H1 (cell line): ENCODE measurements at regions of chr10 and their contacts with region 1.

Region 1: DNA sequence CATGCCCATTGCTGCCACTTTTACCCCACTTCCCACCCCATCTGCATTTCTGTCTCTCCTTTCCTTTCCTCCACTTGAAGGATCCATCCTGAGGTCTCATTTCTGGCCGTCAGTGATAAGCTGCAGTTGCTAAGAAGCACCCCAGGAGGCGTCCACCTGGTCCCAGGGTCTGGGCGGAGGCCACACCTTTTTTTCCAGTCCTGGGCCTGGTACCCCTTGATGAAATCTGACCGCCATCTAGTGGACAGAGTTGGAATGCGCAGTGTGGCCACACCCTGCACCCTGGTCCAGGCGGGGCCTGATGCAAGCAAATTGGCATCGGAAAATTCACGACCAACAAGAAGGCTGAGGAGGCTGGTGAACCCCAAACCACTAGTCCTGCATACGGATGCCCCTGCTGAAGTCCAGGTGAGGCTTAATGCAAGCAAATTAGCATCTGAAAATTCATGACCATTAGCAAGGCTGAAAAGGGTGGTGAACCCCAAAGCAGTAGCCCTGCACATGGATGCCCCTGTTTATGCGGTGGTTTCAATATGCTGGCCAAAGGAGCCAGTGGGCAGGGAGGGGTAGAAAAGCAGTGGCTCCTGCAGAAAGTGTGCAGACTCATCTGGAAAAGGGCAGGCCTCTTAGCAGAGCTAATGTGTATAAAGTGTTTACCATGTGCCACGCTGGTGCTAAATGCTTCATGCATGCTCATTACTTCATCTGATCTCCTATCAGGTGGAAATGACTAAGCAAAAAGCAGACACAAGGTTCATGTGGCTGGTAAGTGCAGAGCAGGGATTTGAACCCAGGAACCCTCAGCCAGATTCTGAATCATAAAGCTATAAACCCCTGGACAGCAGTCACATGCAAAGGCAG is 43.2 kb downstream of the GPAM start:
- DNase-seq: peak; percentile 75 to 96
- H3K4me3 ChIP-seq: no peak overlapping the region
- H3K27ac ChIP-seq: no peak overlapping the region
- H3K4me1 ChIP-seq: no peaks in the 10 kb centered on the region; a peak in 2 of 7 replicates
- H3K27me3 ChIP-seq: no peaks in the 10 kb centered on the region
- CTCF ChIP-seq: peak; percentile 86 to 99 (median 97)
- EP300 ChIP-seq: no peak
- POLR2A ChIP-seq: no peak
- RAD21 ChIP-seq: peak; percentile 85 to 90

Region 2: DNA sequence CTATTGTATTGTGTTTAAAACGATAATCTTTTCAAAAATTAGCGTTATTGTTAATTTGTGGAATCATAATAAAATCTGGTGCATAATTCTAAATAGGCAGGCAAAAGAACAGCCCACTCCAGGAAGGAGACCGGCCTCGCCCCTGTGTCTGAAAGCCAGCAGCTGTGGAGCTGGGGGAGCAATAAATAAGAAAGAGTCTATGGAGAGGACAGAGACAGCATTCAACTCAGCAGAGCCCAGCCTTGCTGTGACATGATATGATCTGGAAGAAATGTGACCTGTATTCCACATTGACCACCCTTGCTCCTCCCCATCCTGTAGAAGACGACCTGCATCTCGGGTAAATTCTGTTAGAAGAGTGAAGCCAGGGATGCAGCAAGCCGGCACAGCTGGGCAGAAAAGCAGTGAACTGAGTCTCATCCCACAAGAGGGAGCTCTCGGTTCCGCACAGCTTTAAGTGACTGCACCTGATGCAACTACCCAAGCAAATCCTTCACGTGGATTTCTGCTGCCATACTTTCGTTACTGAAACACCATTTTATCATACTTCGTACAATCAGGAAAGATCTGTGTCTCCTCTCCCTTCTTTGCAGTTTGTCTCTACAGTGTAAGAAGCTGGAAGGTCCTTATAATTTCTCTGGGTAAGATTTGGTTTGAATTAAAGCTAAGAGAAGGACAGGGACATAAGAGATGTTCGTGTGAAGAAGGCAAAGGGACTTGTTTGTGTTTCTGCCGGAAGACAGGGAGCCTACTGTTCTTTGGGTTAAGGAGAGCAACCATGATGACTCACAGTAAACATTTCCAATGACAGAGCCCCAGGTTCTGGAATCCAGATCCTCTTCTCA is 383.9 kb before region 1 on chr10:
- CTCF ChIA-PET with region 1: interaction called, 33 read pairs
- POLR2A ChIA-PET with region 1: no interaction called
- DNase-seq: peak; percentile 44 to 60
- H3K4me3 ChIP-seq: no peak overlapping the region
- H3K27ac ChIP-seq: no peak overlapping the region
- H3K4me1 ChIP-seq: no peaks in the 10 kb centered on the region
- H3K27me3 ChIP-seq: peaks cover 0 to 3% (median 2%) of the 10 kb centered on the region in 4 experiments; a peak in 2 of 7 replicates
- CTCF ChIP-seq: peak; percentile 79 to 90 (median 80)
- EP300 ChIP-seq: no peak
- POLR2A ChIP-seq: no peak
- RAD21 ChIP-seq: peak; percentile 84 to 87

Region 3: DNA sequence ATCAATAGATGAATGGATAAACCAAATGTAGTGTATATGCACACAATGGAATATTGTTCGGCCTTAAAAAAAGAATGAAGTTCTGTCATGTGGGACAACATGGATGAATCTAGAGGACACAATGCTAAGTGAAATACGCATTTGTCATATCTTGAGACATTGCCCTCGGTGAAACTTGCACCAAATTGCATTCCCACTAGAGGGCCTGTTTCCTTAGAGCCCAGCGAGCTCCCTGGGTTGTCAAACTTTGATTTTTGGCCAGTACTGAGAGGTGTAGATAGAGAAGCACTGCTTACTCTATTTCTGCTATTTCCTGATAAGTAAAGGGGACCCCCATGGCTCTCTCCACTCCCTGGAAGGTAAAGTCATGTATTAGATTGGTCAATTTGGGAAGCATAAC is 113.9 kb before region 1 on chr10:
- CTCF ChIA-PET with region 1: interaction called, 62 read pairs
- POLR2A ChIA-PET with region 1: interaction called, 3 read pairs
- DNase-seq: no peak
- H3K4me3 ChIP-seq: no peak overlapping the region
- H3K27ac ChIP-seq: no peak overlapping the region
- H3K4me1 ChIP-seq: no peaks in the 10 kb centered on the region
- H3K27me3 ChIP-seq: no peaks in the 10 kb centered on the region
- CTCF ChIP-seq: peak in 2 of 3 experiments; percentile 57 to 61; a peak in 3 of 4 replicates
- EP300 ChIP-seq: no peak
- POLR2A ChIP-seq: no peak
- RAD21 ChIP-seq: peak; percentile 38 to 61; a peak in 3 of 4 replicates

Region 4: DNA sequence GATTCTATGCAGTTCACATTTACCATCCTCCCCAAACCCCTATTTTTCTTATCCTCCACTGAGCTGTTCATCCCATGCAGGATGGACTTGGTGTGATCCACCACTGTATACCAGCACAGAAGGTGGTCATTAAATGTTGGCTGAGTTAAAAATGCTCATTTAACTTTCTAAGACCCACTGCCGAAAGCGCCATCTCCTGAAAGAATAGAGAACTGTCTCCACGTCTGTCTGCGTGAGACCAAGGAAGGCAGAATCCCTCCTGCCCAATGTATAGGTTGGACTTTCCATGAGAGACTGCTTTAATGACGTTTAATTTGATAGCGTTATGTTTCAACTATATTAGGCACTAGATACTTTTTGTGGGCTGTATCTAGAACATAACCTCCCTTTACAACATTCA is 81.1 kb before region 1 on chr10:
- CTCF ChIA-PET with region 1: interaction called, 10 read pairs
- POLR2A ChIA-PET with region 1: no interaction called
- DNase-seq: no peak
- H3K4me3 ChIP-seq: no peak overlapping the region
- H3K27ac ChIP-seq: no peak overlapping the region
- H3K4me1 ChIP-seq: no peaks in the 10 kb centered on the region
- H3K27me3 ChIP-seq: no peaks in the 10 kb centered on the region
- CTCF ChIP-seq: peak; percentile 20 to 44 (median 41)
- EP300 ChIP-seq: no peak
- POLR2A ChIP-seq: no peak
- RAD21 ChIP-seq: peak; percentile 31 to 49

Region 5: DNA sequence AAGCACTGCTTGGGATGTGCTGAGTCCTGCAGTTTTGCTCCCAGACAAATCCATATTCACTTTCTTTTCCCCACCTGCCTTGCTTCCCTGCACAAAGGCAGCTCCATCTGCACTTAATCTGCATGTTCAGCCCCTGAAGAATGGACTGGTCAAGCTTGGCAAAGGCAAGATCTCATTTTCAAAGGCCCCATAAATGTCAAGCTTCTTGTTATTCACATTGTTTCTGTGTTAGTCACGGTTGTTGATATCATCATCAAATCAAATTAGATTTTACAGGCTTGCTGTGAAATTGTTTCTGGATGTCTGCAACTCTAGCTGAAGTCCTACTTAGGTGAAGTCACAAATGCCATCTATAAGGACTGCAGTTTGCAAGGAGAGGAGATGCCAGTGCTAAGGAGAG is 47.8 kb before region 1 on chr10:
- CTCF ChIA-PET with region 1: interaction called, 14 read pairs
- POLR2A ChIA-PET with region 1: no interaction called
- DNase-seq: no peak
- H3K4me3 ChIP-seq: no peak overlapping the region
- H3K27ac ChIP-seq: no peak overlapping the region
- H3K4me1 ChIP-seq: no peaks in the 10 kb centered on the region
- H3K27me3 ChIP-seq: no peaks in the 10 kb centered on the region
- CTCF ChIP-seq: no peak
- EP300 ChIP-seq: no peak
- POLR2A ChIP-seq: no peak
- RAD21 ChIP-seq: no peak

Region 6: GRCh38 chr10:112151524-112152039 is 11.2 kb after region 1 on chr10:
- CTCF ChIA-PET with region 1: interaction called, 19 read pairs
- POLR2A ChIA-PET with region 1: no interaction called
- DNase-seq: no peak
- H3K4me3 ChIP-seq: no peak overlapping the region
- H3K27ac ChIP-seq: no peak overlapping the region
- H3K4me1 ChIP-seq: no peaks in the 10 kb centered on the region
- H3K27me3 ChIP-seq: no peaks in the 10 kb centered on the region
- CTCF ChIP-seq: no peak
- EP300 ChIP-seq: no peak
- POLR2A ChIP-seq: no peak
- RAD21 ChIP-seq: no peak

Region 7: DNA sequence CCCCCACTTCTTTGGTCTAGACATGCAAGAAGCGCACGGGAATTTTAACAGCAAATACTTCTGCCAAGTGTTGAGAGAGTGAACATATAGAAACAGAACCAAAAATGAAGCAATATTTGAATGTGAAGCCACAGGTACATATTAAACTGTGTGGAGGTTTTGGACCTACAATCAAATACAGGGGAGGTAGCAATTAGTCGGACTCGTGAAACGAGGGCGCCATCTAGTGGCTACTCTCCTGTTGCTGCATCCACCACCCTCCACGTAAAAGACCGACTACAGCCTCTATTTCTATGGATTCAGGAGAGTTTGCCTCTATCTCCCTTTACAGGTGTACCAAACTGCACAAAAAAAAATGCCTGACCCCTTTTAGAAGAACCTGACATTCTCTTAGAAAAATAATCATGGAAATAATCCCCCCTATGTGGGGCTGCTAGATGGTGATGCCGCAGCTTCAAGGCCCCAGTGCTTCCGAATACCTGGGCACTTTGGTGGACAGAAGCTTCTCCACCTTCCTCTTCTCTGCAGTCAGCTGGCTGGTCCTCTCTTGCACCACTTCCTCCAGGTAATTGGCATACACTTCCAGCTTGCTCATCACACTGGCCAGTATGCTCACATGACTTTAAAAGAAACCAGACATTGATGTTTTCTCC is 174.6 kb after region 1 on chr10:
- CTCF ChIA-PET with region 1: interaction called, 55 read pairs
- POLR2A ChIA-PET with region 1: no interaction called
- DNase-seq: peak; percentile 13 to 89
- H3K4me3 ChIP-seq: no peak overlapping the region
- H3K27ac ChIP-seq: no peak overlapping the region
- H3K4me1 ChIP-seq: no peaks in the 10 kb centered on the region
- H3K27me3 ChIP-seq: no peaks in the 10 kb centered on the region
- CTCF ChIP-seq: peak; percentile 80 to 82 (median 80)
- EP300 ChIP-seq: no peak
- POLR2A ChIP-seq: no peak
- RAD21 ChIP-seq: peak; percentile 93 to 95